Heart right ventricle (tissue), 16 donors: ENCODE measurements at regions of chr15 and their contacts with region 1.

Region 1: DNA sequence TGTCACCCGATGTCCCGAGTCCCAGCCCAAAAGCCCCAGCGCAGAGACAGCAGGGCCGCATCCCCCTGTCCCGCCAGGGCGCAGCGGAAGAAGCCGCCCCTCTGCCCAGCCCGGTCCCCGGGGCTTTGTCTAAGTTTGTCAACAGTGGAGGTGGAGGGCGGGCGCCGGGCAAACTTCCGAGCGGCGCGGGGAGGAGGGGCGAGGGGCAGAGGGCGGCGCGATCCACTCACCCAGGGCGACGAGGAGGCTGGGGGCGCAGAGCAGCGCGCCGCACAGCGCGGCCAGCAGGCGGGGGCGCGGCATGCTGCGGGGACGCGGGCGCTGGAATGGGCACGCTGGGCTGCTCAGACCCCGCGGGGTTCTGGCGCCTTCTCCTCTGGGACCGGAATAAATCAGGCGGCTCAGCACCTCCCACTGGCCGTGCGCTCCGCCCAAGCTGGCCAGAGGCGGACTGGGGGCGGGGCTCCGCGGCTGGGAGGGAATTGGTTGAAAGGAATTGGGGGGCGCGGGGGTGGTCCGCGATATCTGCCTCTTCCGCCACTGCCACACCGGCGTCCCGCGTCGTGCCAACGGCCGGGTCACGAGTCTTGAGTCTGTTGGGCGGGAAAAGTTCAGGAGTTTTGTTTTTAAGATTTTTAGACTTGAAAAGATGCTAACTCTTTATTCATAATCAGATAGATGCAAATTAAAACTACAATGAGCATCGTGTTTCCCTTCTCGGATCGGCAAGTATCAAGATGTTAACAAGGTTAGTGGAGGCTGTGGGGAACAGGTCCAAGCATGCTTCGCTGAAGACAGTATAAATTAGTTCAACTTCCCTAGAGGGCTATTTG is at the start of gene MFGE8:
- DNase-seq: peak; percentile 84 to 86
- ATAC-seq: peak; percentile 74 to 86 (median 80)
- H3K4me3 ChIP-seq: peak within 1 kb of the TSS; percentile 63 to 97 (median 77)
- H3K27ac ChIP-seq: peak within 1 kb of the TSS; percentile 88 to 99 (median 93)
- H3K4me1 ChIP-seq: peaks cover 13 to 61% (median 48%) of the 10 kb centered on the region in 9 donors
- H3K27me3 ChIP-seq: no peaks in the 10 kb centered on the region
- CTCF ChIP-seq: peak in 3 of 9 donors; percentile 30 to 41 (median 34)
- total RNA-seq, gene MFGE8: 359 to 690 (median 511) TPM

Region 2: GRCh38 chr15:88982304-88982945 is 69.2 kb after region 1 on chr15:
- intact Hi-C with region 1: loop called in 1 of 10 experiments (anchors 5 kb)
- DNase-seq: peak; percentile 63 to 95
- ATAC-seq: peak; percentile 92 to 98 (median 96)
- H3K4me3 ChIP-seq: no peak overlapping the region
- H3K27ac ChIP-seq: peak overlapping the region in 9 of 10 donors; percentile 48 to 80 (median 75)
- H3K4me1 ChIP-seq: peaks cover 5 to 22% (median 21%) of the 10 kb centered on the region in 9 donors
- H3K27me3 ChIP-seq: no peaks in the 10 kb centered on the region
- CTCF ChIP-seq: peak in 1 of 9 donors; percentile 4

Region 3: GRCh38 chr15:89017370-89018066 is 104.3 kb after region 1 on chr15:
- intact Hi-C with region 1: loop called in 3 of 10 experiments (anchors 5 kb)
- DNase-seq: peak; percentile 79 to 83
- ATAC-seq: peak; percentile 61 to 78 (median 69)
- H3K4me3 ChIP-seq: peak overlapping the region in 9 of 10 donors; percentile 2 to 49 (median 47)
- H3K27ac ChIP-seq: peak overlapping the region; percentile 16 to 85 (median 80)
- H3K4me1 ChIP-seq: peaks cover 2 to 53% (median 35%) of the 10 kb centered on the region in 9 donors
- H3K27me3 ChIP-seq: no peaks in the 10 kb centered on the region
- CTCF ChIP-seq: peak; percentile 68 to 86 (median 80)